ENCODE measurements at regions of chr1 and their contacts with region 1.

Region 1: GRCh38 chr1:6343506-6344405 is 49.8 kb downstream of the ACOT7 start:
- DNase-seq: peak; percentile 89
- H3K4me3 ChIP-seq: no peak overlapping the region
- H3K27ac ChIP-seq: no peak overlapping the region
- H3K4me1 ChIP-seq: no peaks in the 10 kb centered on the region
- H3K27me3 ChIP-seq: no peaks in the 10 kb centered on the region

Region 2: GRCh38 chr1:4935807-4936206 is 1407.9 kb before region 1 on chr1:
- in situ Hi-C with region 1: no loop called
- DNase-seq: no peak
- H3K4me3 ChIP-seq: no peak overlapping the region
- H3K27ac ChIP-seq: no peak overlapping the region
- H3K4me1 ChIP-seq: no peaks in the 10 kb centered on the region
- H3K27me3 ChIP-seq: no peaks in the 10 kb centered on the region

Region 3: DNA sequence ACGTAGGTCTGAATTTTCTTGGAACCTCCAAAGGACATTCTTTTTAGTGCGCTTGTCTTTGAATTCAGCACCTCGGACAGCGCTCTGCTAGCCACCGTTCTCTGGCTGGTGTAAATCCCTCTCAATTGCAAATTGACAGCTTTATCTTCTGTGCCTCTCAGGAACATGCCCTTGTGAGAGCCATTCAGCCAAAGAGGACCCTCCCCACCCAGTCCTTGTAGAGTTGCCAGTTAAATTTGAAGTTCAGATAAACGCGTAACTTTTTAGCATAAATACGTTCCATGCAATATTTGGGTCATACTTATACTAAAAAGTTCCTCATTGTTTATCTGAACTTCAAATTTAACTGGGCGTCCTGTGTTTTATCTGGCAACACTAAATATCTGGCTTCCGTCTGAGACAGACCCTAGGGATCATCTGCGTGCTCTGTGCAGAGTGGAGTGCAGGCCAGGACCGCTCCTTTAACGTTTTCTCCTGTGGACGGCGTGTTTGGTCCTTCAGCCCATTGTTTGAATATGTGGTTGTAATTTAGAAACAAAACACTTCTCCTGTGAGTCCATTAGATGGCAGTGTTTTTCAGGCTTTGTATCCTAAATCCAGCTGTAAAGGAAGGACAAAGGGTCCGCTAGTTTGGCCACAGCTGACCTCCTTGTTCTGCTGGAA is 291.1 kb before region 1 on chr1:
- in situ Hi-C with region 1: loop called (anchors 25 kb)
- DNase-seq: peak; percentile 73
- H3K4me3 ChIP-seq: no peak overlapping the region
- H3K27ac ChIP-seq: no peak overlapping the region
- H3K4me1 ChIP-seq: no peaks in the 10 kb centered on the region
- H3K27me3 ChIP-seq: no peaks in the 10 kb centered on the region

Region 4: GRCh38 chr1:6245086-6245868 is 98.5 kb before region 1 on chr1:
- in situ Hi-C with region 1: loop called (anchors 5 kb)
- DNase-seq: peak; percentile 92
- H3K4me3 ChIP-seq: no peak overlapping the region
- H3K27ac ChIP-seq: no peak overlapping the region
- H3K4me1 ChIP-seq: 0 out of 2 replicates have a peak, but pooled peaks cover under 1% of the 10 kb centered on the region
- H3K27me3 ChIP-seq: peaks cover 23% of the 10 kb centered on the region

Measured in GM23248 (cell line).